HepG2 (cell line): ENCODE measurements at regions of chr1 and their contacts with region 1.

Region 1: DNA sequence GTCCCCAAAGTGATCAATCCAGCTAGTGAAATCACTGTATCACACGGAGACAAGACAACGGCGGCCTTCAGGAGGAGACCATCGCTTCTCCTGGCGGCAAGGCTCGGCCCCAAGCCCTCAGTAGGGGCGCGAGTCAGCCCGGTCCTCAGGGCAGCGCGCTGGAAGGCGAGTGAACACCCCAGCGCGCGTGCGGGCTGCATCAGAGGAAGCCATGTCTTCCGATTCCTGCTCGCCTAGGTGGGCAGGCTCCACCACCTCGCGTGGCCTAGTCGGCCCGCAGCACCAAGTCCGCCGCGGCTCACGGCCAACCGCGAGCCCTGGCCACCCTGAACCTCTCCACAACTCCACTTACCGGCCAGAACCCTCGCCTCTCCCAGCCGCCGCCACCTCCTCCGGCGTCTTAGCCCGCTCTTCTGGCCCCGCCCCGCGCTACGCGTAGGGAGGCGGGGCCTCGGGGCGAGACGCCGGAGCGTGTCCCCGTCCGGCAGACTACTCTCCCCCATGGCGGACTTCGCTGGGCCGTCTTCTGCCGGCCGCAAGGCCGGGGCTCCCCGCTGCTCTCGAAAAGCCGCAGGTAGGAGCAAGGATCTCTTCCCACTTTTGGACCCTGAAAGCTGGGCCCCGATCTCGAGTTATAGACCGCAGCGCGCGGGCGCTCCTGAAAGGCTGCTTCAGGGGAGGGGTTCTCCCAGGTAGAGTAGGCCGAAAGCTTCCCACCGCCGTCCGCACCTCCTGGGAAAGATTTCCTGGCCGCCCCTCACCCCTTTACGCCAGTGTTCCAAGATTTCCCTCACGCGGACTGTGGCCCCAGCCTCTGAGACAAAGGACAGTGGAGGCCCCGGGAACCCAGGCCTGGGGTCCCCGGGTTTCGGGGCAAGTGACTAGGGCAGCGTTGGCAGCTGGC is at the starts of genes GLMN and RPAP2:
- DNase-seq: peak; percentile 63
- ATAC-seq: peak; percentile 98
- H3K4me3 ChIP-seq: peak within 1 kb of the TSS; percentile 79 to 98 (median 85)
- H3K27ac ChIP-seq: peak within 1 kb of the TSS; percentile 92
- H3K4me1 ChIP-seq: peaks cover 20% of the 10 kb centered on the region
- H3K27me3 ChIP-seq: no peaks in the 10 kb centered on the region
- CTCF ChIP-seq: peak; percentile 39
- EP300 ChIP-seq: no peak
- POLR2A ChIP-seq: peak; percentile 91 to 97
- RAD21 ChIP-seq: peak; percentile 73
- total RNA-seq, gene GLMN: 18.4 and 27.8 TPM in 2 replicates
- total RNA-seq, gene RPAP2: 34.8 and 50.7 TPM in 2 replicates

Region 2: GRCh38 chr1:91511386-91511785 is 787.4 kb before region 1 on chr1:
- CTCF ChIA-PET with region 1: no interaction called
- POLR2A ChIA-PET with region 1: no interaction called
- in situ Hi-C with region 1: loop called (anchors 10 kb)
- intact Hi-C with region 1: no loop called
- DNase-seq: peak; percentile 35
- ATAC-seq: no peak
- H3K4me3 ChIP-seq: no peak overlapping the region
- H3K27ac ChIP-seq: no peak overlapping the region
- H3K4me1 ChIP-seq: no peaks in the 10 kb centered on the region
- H3K27me3 ChIP-seq: no peaks in the 10 kb centered on the region
- CTCF ChIP-seq: peak; percentile 52
- EP300 ChIP-seq: no peak
- POLR2A ChIP-seq: no peak
- RAD21 ChIP-seq: no peak

Region 3: DNA sequence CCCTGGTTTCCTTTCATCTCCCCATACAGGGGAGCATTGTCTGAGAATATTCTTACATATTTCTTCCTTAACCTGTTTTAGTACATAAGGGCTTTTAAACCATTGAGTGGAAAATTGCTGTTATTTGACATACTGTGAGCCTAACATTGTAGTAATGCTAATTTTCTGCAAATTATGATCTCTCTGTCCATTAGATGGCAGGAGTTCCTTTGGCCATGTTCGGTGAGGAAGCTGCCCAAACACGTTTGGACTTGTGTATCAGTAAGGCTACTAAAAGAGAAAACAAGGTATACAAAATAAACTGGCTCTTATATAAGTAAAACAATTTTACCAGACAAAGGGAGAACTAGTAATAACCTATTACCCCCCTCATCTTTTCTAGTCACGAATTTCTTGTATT is 769.0 kb before region 1 on chr1:
- CTCF ChIA-PET with region 1: no interaction called
- POLR2A ChIA-PET with region 1: no interaction called
- in situ Hi-C with region 1: no loop called
- intact Hi-C with region 1: loop called (anchors 10 kb)
- DNase-seq: no peak
- ATAC-seq: peak; percentile 30; the same call in 1 of the 3 replicates
- H3K4me3 ChIP-seq: no peak overlapping the region
- H3K27ac ChIP-seq: no peak overlapping the region
- H3K4me1 ChIP-seq: peaks cover 5% of the 10 kb centered on the region; the same call in 1 of the 2 replicates
- H3K27me3 ChIP-seq: no peaks in the 10 kb centered on the region
- CTCF ChIP-seq: peak; percentile 28; the same call in 1 of the 2 replicates
- EP300 ChIP-seq: no peak
- POLR2A ChIP-seq: no peak
- RAD21 ChIP-seq: no peak

Region 4: DNA sequence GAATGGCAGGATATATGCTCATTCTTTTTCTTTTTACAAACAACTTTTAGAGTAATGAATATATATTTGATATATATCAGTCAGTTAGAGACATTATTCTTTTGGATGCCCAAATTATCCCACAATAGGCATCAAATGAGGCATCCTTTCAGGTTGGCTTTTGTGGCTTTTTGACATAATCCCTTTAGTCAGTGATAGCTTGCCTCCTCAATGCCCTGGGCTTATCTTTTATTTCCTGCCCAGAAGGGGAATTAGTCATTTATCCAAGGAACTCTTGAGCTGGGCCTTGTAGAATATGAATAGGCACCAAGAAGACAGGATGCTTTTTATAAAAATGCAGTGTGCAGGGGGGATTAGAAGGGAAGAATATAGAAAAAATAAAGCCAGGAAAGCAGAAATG is 246.9 kb before region 1 on chr1:
- CTCF ChIA-PET with region 1: no interaction called
- POLR2A ChIA-PET with region 1: no interaction called
- in situ Hi-C with region 1: no loop called
- intact Hi-C with region 1: no loop called
- DNase-seq: no peak
- ATAC-seq: no peak
- H3K4me3 ChIP-seq: no peak overlapping the region
- H3K27ac ChIP-seq: no peak overlapping the region
- H3K4me1 ChIP-seq: no peaks in the 10 kb centered on the region
- H3K27me3 ChIP-seq: no peaks in the 10 kb centered on the region
- CTCF ChIP-seq: no peak
- EP300 ChIP-seq: no peak
- POLR2A ChIP-seq: no peak
- RAD21 ChIP-seq: no peak

Region 5: GRCh38 chr1:92211166-92211565 is 87.7 kb before region 1 on chr1:
- CTCF ChIA-PET with region 1: no interaction called
- POLR2A ChIA-PET with region 1: no interaction called
- in situ Hi-C with region 1: no loop called
- intact Hi-C with region 1: no loop called
- DNase-seq: no peak
- ATAC-seq: no peak
- H3K4me3 ChIP-seq: no peak overlapping the region
- H3K27ac ChIP-seq: no peak overlapping the region
- H3K4me1 ChIP-seq: no peaks in the 10 kb centered on the region
- H3K27me3 ChIP-seq: no peaks in the 10 kb centered on the region; a peak in 2 of 5 replicates
- CTCF ChIP-seq: no peak
- EP300 ChIP-seq: no peak
- POLR2A ChIP-seq: no peak
- RAD21 ChIP-seq: no peak

Region 6: GRCh38 chr1:92244376-92244775 is 54.4 kb before region 1 on chr1:
- CTCF ChIA-PET with region 1: no interaction called
- POLR2A ChIA-PET with region 1: no interaction called
- in situ Hi-C with region 1: no loop called
- intact Hi-C with region 1: no loop called
- DNase-seq: no peak
- ATAC-seq: no peak
- H3K4me3 ChIP-seq: no peak overlapping the region
- H3K27ac ChIP-seq: no peak overlapping the region
- H3K4me1 ChIP-seq: no peaks in the 10 kb centered on the region
- H3K27me3 ChIP-seq: no peaks in the 10 kb centered on the region
- CTCF ChIP-seq: no peak
- EP300 ChIP-seq: no peak
- POLR2A ChIP-seq: no peak
- RAD21 ChIP-seq: no peak

Region 7: DNA sequence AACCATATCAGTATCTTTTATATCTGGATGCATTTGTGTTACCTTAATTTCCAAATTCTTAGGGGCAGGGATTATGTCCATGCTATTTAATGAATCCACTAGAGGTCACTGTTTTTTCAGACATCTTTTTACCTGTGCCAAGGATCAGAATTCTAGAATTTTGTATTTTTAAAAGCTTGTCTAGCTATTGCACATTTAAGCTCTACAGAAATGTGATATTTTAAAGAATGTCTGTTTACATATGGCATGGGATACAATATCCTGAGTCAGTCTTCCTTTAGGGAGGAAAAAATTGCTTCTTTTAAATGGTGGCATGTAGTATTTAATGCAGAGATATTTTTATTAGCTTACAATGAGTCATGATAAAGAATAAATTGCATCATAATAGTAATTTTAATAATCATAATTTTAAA is 11.4 kb after region 1 on chr1:
- CTCF ChIA-PET with region 1: no interaction called
- POLR2A ChIA-PET with region 1: interaction called, 4 read pairs
- in situ Hi-C with region 1: no loop called
- intact Hi-C with region 1: loop called (anchors 1 kb)
- DNase-seq: no peak
- ATAC-seq: peak; percentile 42; the same call in 2 of the 3 replicates
- H3K4me3 ChIP-seq: no peak overlapping the region
- H3K27ac ChIP-seq: no peak overlapping the region
- H3K4me1 ChIP-seq: no peaks in the 10 kb centered on the region
- H3K27me3 ChIP-seq: no peaks in the 10 kb centered on the region
- CTCF ChIP-seq: peak; percentile 50
- EP300 ChIP-seq: no peak
- POLR2A ChIP-seq: no peak
- RAD21 ChIP-seq: no peak; the same call in 1 of the 2 replicates